A673 (cell line): ENCODE measurements at regions of chr12 and their contacts with region 1.

Region 1: DNA sequence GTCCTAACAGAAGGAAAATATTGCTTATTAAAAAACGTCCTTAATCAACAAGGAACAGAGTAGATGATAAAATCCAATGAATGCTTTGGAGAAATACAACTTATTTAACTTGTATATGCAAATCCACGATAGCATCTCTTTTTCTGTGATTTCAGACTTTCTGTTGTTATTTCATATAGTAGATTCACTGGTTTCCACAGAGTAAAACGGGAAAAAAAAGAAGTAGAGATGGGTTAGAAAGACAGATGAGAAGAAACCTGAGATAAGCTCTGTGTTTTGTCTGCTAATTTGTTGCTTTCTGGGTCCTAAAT is 447.7 kb downstream of the RERGL start:
- DNase-seq: no peak
- H3K4me3 ChIP-seq: peak overlapping the region; percentile 26
- H3K27ac ChIP-seq: peak overlapping the region; percentile 7
- H3K4me1 ChIP-seq: peaks cover 14% of the 10 kb centered on the region
- H3K27me3 ChIP-seq: no peaks in the 10 kb centered on the region
- CTCF ChIP-seq: no peak; the same call in 1 of the 2 replicates

Region 2: GRCh38 chr12:16385782-16386646 is 1256.3 kb before region 1 on chr12:
- CTCF ChIA-PET with region 1: no interaction called
- POLR2A ChIA-PET with region 1: no interaction called
- intact Hi-C with region 1: loop called (anchors 10 kb)
- DNase-seq: peak; percentile 91
- H3K4me3 ChIP-seq: no peak overlapping the region
- H3K27ac ChIP-seq: peak overlapping the region; percentile 48
- H3K4me1 ChIP-seq: peaks cover 13% of the 10 kb centered on the region
- H3K27me3 ChIP-seq: no peaks in the 10 kb centered on the region
- CTCF ChIP-seq: peak; percentile 75

Region 3: GRCh38 chr12:17169726-17170471 is 472.4 kb before region 1 on chr12:
- CTCF ChIA-PET with region 1: no interaction called
- POLR2A ChIA-PET with region 1: no interaction called
- intact Hi-C with region 1: loop called (anchors 5 kb)
- DNase-seq: no peak
- H3K4me3 ChIP-seq: no peak overlapping the region
- H3K27ac ChIP-seq: no peak overlapping the region
- H3K4me1 ChIP-seq: no peaks in the 10 kb centered on the region
- H3K27me3 ChIP-seq: no peaks in the 10 kb centered on the region
- CTCF ChIP-seq: no peak

Region 4: GRCh38 chr12:17992002-17992656 is 349.8 kb after region 1 on chr12:
- CTCF ChIA-PET with region 1: no interaction called
- POLR2A ChIA-PET with region 1: no interaction called
- intact Hi-C with region 1: loop called (anchors 10 kb)
- DNase-seq: peak; percentile 77
- H3K4me3 ChIP-seq: no peak overlapping the region
- H3K27ac ChIP-seq: no peak overlapping the region
- H3K4me1 ChIP-seq: no peaks in the 10 kb centered on the region
- H3K27me3 ChIP-seq: no peaks in the 10 kb centered on the region
- CTCF ChIP-seq: peak; percentile 88